ENCODE measurements at regions of chr5 and their contacts with region 1.

Region 1: GRCh38 chr5:17365811-17366138 is 132.3 kb upstream of the TAF11L2 start:
- DNase-seq: peak; percentile 78
- H3K4me3 ChIP-seq: no peak overlapping the region
- H3K27ac ChIP-seq: peak overlapping the region; percentile 77
- H3K27me3 ChIP-seq: no peaks in the 10 kb centered on the region
- CTCF ChIP-seq: no peak

Region 2: DNA sequence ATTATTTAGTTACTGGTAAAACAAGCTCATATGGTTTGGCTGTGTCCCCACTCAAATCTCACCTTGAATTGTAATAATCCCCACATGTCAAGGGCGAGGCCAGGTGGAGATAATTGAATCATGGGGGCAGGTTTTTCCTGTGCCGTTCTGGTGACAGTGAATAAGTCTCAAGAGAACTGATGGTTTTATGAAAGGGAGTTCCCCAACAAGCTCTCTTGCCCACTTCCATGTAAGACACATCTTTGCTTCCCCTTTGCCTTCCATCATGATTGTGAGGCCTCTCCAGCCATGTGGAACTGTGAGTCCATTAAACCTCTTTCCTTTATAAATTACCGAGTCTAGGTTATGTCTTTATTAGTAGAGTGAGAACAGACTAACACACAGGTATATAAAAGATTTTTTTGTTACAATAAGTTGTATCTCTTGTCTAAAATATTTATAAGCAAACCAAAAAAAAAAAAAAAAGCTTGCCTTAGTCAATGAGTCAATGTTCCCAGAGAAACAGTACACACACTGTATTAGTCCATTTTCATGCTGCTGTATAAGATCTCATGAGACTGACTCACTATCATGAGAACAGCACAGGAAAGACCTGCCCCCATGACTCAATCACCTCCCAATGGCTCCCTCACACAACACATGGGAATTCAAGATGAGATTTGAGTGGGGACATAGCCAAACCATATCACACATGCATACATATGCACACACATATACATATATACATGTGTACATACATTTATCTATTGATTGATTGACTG is 10.0 kb before region 1 on chr5:
- CTCF ChIA-PET with region 1: interaction called, 3 read pairs
- POLR2A ChIA-PET with region 1: interaction called, 10 read pairs
- DNase-seq: no peak
- H3K4me3 ChIP-seq: no peak overlapping the region
- H3K27ac ChIP-seq: no peak overlapping the region
- H3K27me3 ChIP-seq: no peaks in the 10 kb centered on the region
- CTCF ChIP-seq: no peak

Region 3: GRCh38 chr5:17379100-17379951 is 13.6 kb after region 1 on chr5:
- CTCF ChIA-PET with region 1: interaction called, 3 read pairs
- POLR2A ChIA-PET with region 1: interaction called, 13 read pairs
- DNase-seq: no peak
- H3K4me3 ChIP-seq: no peak overlapping the region
- H3K27ac ChIP-seq: peak overlapping the region; percentile 25
- H3K27me3 ChIP-seq: no peaks in the 10 kb centered on the region
- CTCF ChIP-seq: no peak

Region 4: GRCh38 chr5:17735761-17736160 is 370.0 kb after region 1 on chr5:
- CTCF ChIA-PET with region 1: no interaction called
- POLR2A ChIA-PET with region 1: no interaction called
- DNase-seq: no peak
- H3K4me3 ChIP-seq: no peak overlapping the region
- H3K27ac ChIP-seq: no peak overlapping the region
- H3K27me3 ChIP-seq: no peaks in the 10 kb centered on the region
- CTCF ChIP-seq: no peak

Region 5: GRCh38 chr5:18152671-18153070 is 786.9 kb after region 1 on chr5:
- CTCF ChIA-PET with region 1: no interaction called
- POLR2A ChIA-PET with region 1: no interaction called
- DNase-seq: no peak
- H3K4me3 ChIP-seq: no peak overlapping the region
- H3K27ac ChIP-seq: no peak overlapping the region
- H3K27me3 ChIP-seq: no peaks in the 10 kb centered on the region
- CTCF ChIP-seq: no peak